Gastrocnemius medialis (tissue), 4 donors: ENCODE measurements at regions of chr12 and their contacts with region 1.

Region 1: DNA sequence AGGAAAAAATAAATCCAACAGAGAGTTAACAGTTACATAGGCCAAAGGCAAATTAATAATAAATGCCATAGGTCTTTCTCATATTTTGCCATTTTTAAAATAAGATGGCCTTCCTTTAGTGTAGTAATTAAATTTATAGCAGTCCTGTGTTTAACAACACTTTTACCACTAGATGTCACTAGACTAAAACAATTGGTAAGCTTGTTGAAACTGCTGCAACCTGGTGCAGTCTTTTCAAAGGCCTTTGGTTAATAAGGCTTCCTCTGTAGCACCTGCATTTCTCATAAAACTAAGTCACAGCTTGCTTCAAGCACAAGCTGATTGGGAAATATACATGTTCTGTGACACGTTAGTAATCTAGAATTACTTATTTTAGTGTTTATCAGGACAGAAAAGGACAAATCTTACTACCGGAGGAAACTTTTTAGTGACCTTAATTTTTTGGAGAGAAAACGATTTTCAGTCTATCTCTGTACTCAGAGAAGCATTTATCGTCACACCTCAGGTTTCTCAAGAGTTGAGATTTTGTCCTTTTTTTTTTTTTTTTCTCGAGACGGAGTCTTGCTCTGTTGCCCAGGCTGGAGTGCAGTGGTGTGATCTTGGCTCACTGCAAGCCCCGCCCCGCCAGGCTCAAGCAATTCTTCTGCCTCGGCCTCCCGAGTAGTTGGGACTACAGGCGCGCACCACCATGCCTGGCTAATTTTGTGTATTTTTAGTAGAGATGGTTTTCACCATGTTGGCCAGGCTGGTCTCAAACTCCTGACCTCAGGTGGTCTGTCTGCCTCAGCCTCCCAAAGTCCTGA is 20.0 kb downstream of the BORCS5 start:
- DNase-seq: no peak
- ATAC-seq: peak; percentile 83 to 98
- H3K4me3 ChIP-seq: no peak overlapping the region
- H3K27ac ChIP-seq: no peak overlapping the region
- H3K4me1 ChIP-seq: peaks cover 0 to 12% of the 10 kb centered on the region in 2 donors
- H3K27me3 ChIP-seq: no peaks in the 10 kb centered on the region
- CTCF ChIP-seq: peak; percentile 65 to 86 (median 71)
- POLR2A ChIP-seq: no peak

Region 2: GRCh38 chr12:12392413-12392812 is 15.6 kb after region 1 on chr12:
- in situ Hi-C with region 1: no loop called
- intact Hi-C with region 1: loop called (anchors 2 kb)
- DNase-seq: no peak
- ATAC-seq: no peak
- H3K4me3 ChIP-seq: no peak overlapping the region
- H3K27ac ChIP-seq: no peak overlapping the region
- H3K4me1 ChIP-seq: peaks cover 4 to 15% of the 10 kb centered on the region in 2 donors
- H3K27me3 ChIP-seq: no peaks in the 10 kb centered on the region
- CTCF ChIP-seq: no peak
- POLR2A ChIP-seq: no peak

Region 3: GRCh38 chr12:12551115-12551514 is 174.3 kb after region 1 on chr12:
- in situ Hi-C with region 1: loop called in 1 of 4 experiments (anchors 10 kb)
- intact Hi-C with region 1: no loop called
- DNase-seq: no peak
- ATAC-seq: no peak
- H3K4me3 ChIP-seq: no peak overlapping the region
- H3K27ac ChIP-seq: peak overlapping the region in 1 of 4 donors; percentile 1
- H3K4me1 ChIP-seq: peaks cover 20 to 38% of the 10 kb centered on the region in 2 donors
- H3K27me3 ChIP-seq: no peaks in the 10 kb centered on the region
- CTCF ChIP-seq: no peak
- POLR2A ChIP-seq: no peak

Region 4: GRCh38 chr12:12661086-12661485 is 284.2 kb after region 1 on chr12:
- in situ Hi-C with region 1: no loop called
- intact Hi-C with region 1: loop called (anchors 1 kb)
- DNase-seq: no peak
- ATAC-seq: no peak
- H3K4me3 ChIP-seq: no peak overlapping the region
- H3K27ac ChIP-seq: no peak overlapping the region
- H3K4me1 ChIP-seq: no peaks in the 10 kb centered on the region
- H3K27me3 ChIP-seq: no peaks in the 10 kb centered on the region
- CTCF ChIP-seq: no peak
- POLR2A ChIP-seq: no peak

Region 5: DNA sequence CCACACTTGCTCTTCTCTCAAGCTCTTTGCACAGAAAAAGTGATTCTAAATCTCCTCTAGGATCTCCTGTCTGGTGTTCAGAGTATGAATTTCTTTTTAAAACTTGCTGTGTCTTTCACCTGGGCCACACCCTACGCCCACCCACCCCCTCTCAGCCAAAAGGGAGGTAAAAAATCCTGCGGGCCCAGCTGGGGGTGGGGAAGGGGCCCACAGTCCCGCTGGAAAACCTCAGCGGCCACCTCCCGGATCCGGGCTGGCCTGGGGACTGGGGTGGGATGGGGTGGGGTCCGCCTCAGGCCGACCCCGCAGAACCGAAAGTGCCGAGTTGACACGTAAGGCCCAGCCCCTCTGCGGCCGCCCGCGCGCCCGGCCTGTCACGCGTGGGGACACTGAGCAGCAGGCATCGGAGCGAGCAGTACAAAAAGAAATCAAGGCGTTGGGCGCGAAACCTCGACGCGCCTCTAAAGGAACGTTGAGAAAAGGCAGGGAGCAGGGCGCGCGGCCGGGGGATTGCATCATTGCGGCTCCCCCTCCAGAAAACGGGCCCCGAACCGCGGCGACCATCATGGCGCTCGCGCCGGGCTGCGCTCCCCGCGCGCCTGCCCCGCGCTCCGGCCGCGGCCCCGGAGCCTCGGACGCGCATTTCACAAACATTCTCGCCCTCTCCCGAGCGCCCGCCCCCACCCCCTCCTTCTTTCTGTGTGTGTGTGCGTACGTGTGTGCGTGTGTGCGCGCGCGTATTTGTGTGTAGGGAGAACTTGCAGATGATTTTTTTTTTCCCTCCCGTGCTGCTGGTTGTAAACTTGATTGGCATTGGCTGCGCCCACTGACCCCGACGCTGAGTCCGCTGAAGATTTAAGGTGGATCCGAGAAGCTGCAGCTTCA is 348.1 kb after region 1 on chr12:
- in situ Hi-C with region 1: loop called in 2 of 4 experiments (anchors 25 kb)
- intact Hi-C with region 1: loop called (anchors 5 kb)
- DNase-seq: peak; percentile 89 to 95
- ATAC-seq: peak; percentile 90 to 91
- H3K4me3 ChIP-seq: peak overlapping the region; percentile 66 to 88 (median 80)
- H3K27ac ChIP-seq: peak overlapping the region; percentile 96 to 99 (median 98)
- H3K4me1 ChIP-seq: peaks cover 36 to 37% of the 10 kb centered on the region in 2 donors
- H3K27me3 ChIP-seq: no peaks in the 10 kb centered on the region
- CTCF ChIP-seq: peak in 2 of 5 experiments; percentile 9 to 39
- POLR2A ChIP-seq: peak; percentile 85 to 91